Activated CD4-positive, alpha-beta T cell treated with anti-CD3 and anti-CD28 coated beads, Interleukin-2, amount 10 ng/mL, durations not matched to agents 7 days and 5 days (primary cell): ENCODE measurements at regions of chr6 and their contacts with region 1.

Region 1: GRCh38 chr6:30453508-30454116 is 35.7 kb upstream of the HLA-E start:
- DNase-seq: peak; percentile 86
- H3K4me3 Mint-ChIP-seq: no peak overlapping the region
- H3K27ac Mint-ChIP-seq: no peak overlapping the region
- H3K4me1 Mint-ChIP-seq: peaks cover 33% of the 10 kb centered on the region
- H3K27me3 Mint-ChIP-seq: peaks cover 88% of the 10 kb centered on the region

Region 2: DNA sequence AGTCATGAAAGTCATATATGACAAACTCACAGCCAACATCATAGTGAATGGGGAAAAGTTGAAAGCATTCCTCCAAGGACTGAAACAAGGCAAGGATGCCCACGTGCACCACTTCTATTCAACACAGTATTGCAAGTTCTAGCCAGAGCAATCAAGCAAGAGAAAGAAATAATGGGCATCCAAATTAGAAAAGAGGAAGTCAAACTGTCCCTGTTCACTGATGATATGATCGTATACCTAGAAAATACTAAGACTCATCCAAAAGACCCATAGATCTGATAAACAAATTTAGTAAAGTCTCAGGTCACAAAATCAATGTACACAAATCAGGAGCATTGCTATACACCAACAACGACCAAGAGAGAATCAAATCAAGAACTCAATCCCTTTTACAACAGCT is 67.4 kb before region 1 on chr6:
- CTCF ChIA-PET with region 1: no interaction called
- POLR2A ChIA-PET with region 1: no interaction called
- DNase-seq: no peak
- H3K4me3 Mint-ChIP-seq: no peak overlapping the region
- H3K27ac Mint-ChIP-seq: no peak overlapping the region
- H3K4me1 Mint-ChIP-seq: no peaks in the 10 kb centered on the region
- H3K27me3 Mint-ChIP-seq: peaks cover 79% of the 10 kb centered on the region

Region 3: GRCh38 chr6:30463651-30464618 is 10.3 kb after region 1 on chr6:
- CTCF ChIA-PET with region 1: interaction called, 14 read pairs
- POLR2A ChIA-PET with region 1: no interaction called
- DNase-seq: peak; percentile 73
- H3K4me3 Mint-ChIP-seq: no peak overlapping the region
- H3K27ac Mint-ChIP-seq: no peak overlapping the region
- H3K4me1 Mint-ChIP-seq: peaks cover 26% of the 10 kb centered on the region
- H3K27me3 Mint-ChIP-seq: peaks cover 88% of the 10 kb centered on the region

Region 4: GRCh38 chr6:30470968-30471367 is 17.4 kb after region 1 on chr6:
- CTCF ChIA-PET with region 1: interaction called, 14 read pairs
- POLR2A ChIA-PET with region 1: no interaction called
- DNase-seq: no peak
- H3K4me3 Mint-ChIP-seq: no peak overlapping the region
- H3K27ac Mint-ChIP-seq: no peak overlapping the region
- H3K4me1 Mint-ChIP-seq: peaks cover 9% of the 10 kb centered on the region
- H3K27me3 Mint-ChIP-seq: peaks cover 74% of the 10 kb centered on the region